AG04449 (cell line): ENCODE measurements at regions of chr1 and their contacts with region 1.

Region 1: DNA sequence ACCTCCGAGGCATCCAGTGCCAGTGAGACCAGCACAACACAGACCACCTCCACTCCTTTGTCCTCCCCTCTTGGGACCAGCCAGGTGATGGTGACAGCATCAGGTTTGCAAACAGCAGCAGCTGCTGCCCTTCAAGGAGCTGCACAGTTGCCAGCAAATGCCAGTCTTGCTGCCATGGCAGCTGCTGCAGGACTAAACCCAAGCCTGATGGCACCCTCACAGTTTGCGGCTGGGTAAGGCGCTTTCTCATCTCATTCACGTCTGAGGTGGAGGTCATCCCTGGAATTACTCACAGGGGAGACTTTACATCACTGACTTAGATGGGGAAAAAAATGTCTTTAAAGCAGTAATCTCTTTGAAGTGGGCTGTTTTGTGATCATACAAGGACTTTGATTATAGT is 106.3 kb downstream of the CD247 start:
- DNase-seq: no peak
- H3K4me3 ChIP-seq: no peak overlapping the region
- CTCF ChIP-seq: no peak

Region 2: DNA sequence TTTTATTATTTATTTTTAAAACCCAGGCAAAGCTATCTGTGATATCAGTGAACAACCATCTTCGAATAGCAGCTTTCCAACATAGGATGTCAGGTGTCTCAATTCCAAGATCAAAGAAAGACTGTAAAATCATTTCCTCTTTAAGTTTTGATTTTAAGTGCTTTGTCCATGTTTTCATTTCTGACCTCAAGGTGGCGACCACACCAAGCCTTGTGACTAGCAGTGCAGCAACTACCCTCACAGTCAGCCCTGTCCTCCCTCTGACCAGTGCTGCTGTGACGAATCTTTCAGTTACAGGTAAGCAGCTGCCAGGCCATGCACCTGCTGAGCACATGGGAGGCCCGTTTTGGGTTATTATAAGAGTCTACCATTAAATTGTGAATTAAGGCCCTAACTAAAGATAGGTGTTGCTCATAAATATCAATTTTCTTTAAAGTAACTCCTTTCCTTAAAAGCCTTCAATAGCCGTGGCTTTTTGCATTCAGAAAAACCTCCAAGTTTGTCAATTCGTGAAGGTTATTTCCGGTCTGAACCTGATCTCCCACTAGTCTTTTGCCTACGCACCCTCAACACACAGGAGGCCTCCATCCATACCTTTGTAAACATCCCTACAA is 10.7 kb before region 1 on chr1:
- CTCF ChIA-PET with region 1: interaction called, 35 read pairs
- POLR2A ChIA-PET with region 1: no interaction called
- DNase-seq: no peak
- H3K4me3 ChIP-seq: no peak overlapping the region
- CTCF ChIP-seq: peak; percentile 60